CD8-positive, alpha-beta T cell (primary cell): ENCODE measurements at regions of chr7 and their contacts with region 1.

Region 1: DNA sequence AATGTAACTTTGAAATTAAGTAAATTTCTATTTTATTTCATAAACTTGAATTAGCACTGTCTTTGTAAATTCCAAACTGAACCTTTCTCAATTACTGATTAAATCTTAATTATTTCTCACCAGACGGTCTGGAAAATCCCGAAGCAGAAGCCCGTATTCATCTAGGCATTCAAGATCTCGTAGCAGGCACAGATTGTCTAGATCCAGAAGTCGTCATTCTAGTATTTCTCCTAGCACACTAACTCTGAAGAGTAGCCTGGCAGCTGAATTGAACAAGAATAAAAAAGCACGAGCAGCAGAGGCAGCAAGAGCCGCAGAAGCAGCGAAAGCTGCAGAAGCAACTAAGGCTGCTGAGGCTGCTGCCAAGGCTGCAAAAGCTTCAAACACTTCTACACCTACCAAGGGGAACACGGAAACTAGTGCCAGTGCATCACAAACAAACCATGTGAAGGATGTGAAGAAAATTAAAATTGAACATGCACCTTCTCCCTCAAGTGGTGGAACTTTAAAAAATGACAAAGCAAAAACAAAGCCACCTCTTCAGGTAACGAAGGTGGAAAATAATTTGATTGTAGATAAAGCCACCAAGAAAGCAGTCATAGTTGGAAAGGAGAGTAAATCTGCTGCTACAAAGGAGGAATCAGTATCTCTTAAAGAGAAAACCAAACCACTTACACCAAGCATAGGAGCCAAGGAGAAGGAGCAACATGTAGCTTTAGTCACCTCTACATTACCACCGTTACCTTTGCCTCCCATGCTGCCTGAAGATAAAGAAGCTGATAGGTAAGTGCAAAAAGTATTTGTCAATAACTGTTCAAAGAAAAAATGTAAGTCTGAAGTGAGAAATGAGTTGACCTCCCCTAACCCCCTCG is 37.7 kb downstream of the CDK13 start:
- DNase-seq: peak in 6 of 9 experiments; percentile 16 to 72 (median 52)
- ATAC-seq: peak; percentile 87
- H3K4me3 ChIP-seq: no peak overlapping the region
- H3K4me3 Mint-ChIP-seq: peak overlapping the region; percentile 52
- H3K27ac ChIP-seq: peak overlapping the region; percentile 5 to 8
- H3K27ac Mint-ChIP-seq: peak overlapping the region; percentile 79
- H3K4me1 ChIP-seq: peaks cover 34% of the 10 kb centered on the region
- H3K4me1 Mint-ChIP-seq: peaks cover 51% of the 10 kb centered on the region
- H3K27me3 ChIP-seq: no peaks in the 10 kb centered on the region
- H3K27me3 Mint-ChIP-seq: no peaks in the 10 kb centered on the region
- CTCF ChIP-seq: no peak

Region 2: DNA sequence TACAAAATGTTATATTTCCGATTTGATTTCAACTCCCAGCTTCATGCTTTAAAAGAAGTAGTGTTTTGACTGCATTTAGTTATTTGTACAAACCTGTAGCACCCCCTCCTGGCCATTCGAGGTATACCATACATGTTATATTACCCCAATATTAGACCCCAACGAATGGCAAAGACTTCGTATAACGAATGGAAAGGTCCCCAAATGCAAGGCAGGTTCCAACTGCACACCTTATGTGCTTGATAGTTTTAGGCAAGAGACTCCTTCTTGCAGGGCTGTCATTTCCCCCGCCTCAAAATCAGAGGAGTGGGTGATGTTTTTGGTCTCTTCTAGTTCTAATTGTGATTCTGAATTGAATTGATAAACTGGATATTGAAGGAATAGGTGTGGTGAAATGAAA is 1613.2 kb before region 1 on chr7:
- CTCF ChIA-PET with region 1: no interaction called
- POLR2A ChIA-PET with region 1: no interaction called
- intact Hi-C with region 1: no loop called
- DNase-seq: peak in 8 of 9 experiments; percentile 52 to 79 (median 72)
- ATAC-seq: peak; percentile 74
- H3K4me3 ChIP-seq: no peak overlapping the region
- H3K4me3 Mint-ChIP-seq: no peak overlapping the region
- H3K27ac ChIP-seq: peak overlapping the region in 1 of 2 experiments; percentile 22
- H3K27ac Mint-ChIP-seq: peak overlapping the region; percentile 46
- H3K4me1 ChIP-seq: peaks cover 23% of the 10 kb centered on the region
- H3K4me1 Mint-ChIP-seq: peaks cover 52% of the 10 kb centered on the region
- H3K27me3 ChIP-seq: no peaks in the 10 kb centered on the region
- H3K27me3 Mint-ChIP-seq: no peaks in the 10 kb centered on the region
- CTCF ChIP-seq: peak; percentile 92

Region 3: GRCh38 chr7:38550836-38551235 is 1436.9 kb before region 1 on chr7:
- CTCF ChIA-PET with region 1: no interaction called
- POLR2A ChIA-PET with region 1: no interaction called
- intact Hi-C with region 1: no loop called
- DNase-seq: no peak
- ATAC-seq: no peak
- H3K4me3 ChIP-seq: no peak overlapping the region
- H3K4me3 Mint-ChIP-seq: no peak overlapping the region
- H3K27ac ChIP-seq: no peak overlapping the region
- H3K27ac Mint-ChIP-seq: no peak overlapping the region
- H3K4me1 ChIP-seq: no peaks in the 10 kb centered on the region
- H3K4me1 Mint-ChIP-seq: no peaks in the 10 kb centered on the region
- H3K27me3 ChIP-seq: no peaks in the 10 kb centered on the region
- H3K27me3 Mint-ChIP-seq: peaks cover 11% of the 10 kb centered on the region
- CTCF ChIP-seq: no peak

Region 4: GRCh38 chr7:39732837-39733804 is 254.6 kb before region 1 on chr7:
- CTCF ChIA-PET with region 1: no interaction called
- POLR2A ChIA-PET with region 1: no interaction called
- intact Hi-C with region 1: no loop called
- DNase-seq: peak; percentile 84 to 98 (median 95)
- ATAC-seq: peak; percentile 92
- H3K4me3 ChIP-seq: peak overlapping the region; percentile 79 to 85
- H3K4me3 Mint-ChIP-seq: peak overlapping the region; percentile 91
- H3K27ac ChIP-seq: peak overlapping the region; percentile 66 to 91
- H3K27ac Mint-ChIP-seq: peak overlapping the region; percentile 94
- H3K4me1 ChIP-seq: peaks cover 26% of the 10 kb centered on the region
- H3K4me1 Mint-ChIP-seq: peaks cover 40% of the 10 kb centered on the region
- H3K27me3 ChIP-seq: no peaks in the 10 kb centered on the region
- H3K27me3 Mint-ChIP-seq: no peaks in the 10 kb centered on the region
- CTCF ChIP-seq: no peak

Region 5: GRCh38 chr7:39937366-39938153 is 50.2 kb before region 1 on chr7:
- CTCF ChIA-PET with region 1: no interaction called
- POLR2A ChIA-PET with region 1: interaction called, 4 read pairs
- intact Hi-C with region 1: loop called in 1 of 2 experiments (anchors 1 kb)
- DNase-seq: no peak
- ATAC-seq: no peak
- H3K4me3 ChIP-seq: no peak overlapping the region
- H3K4me3 Mint-ChIP-seq: no peak overlapping the region
- H3K27ac ChIP-seq: no peak overlapping the region
- H3K27ac Mint-ChIP-seq: no peak overlapping the region
- H3K4me1 ChIP-seq: no peaks in the 10 kb centered on the region
- H3K4me1 Mint-ChIP-seq: no peaks in the 10 kb centered on the region
- H3K27me3 ChIP-seq: no peaks in the 10 kb centered on the region
- H3K27me3 Mint-ChIP-seq: no peaks in the 10 kb centered on the region
- CTCF ChIP-seq: no peak

Region 6: GRCh38 chr7:39971924-39972323 is 15.8 kb before region 1 on chr7:
- CTCF ChIA-PET with region 1: interaction called, 4 read pairs
- POLR2A ChIA-PET with region 1: no interaction called
- intact Hi-C with region 1: loop called in 1 of 2 experiments (anchors 2 kb)
- DNase-seq: no peak
- ATAC-seq: no peak
- H3K4me3 ChIP-seq: no peak overlapping the region
- H3K4me3 Mint-ChIP-seq: peak overlapping the region; percentile 18
- H3K27ac ChIP-seq: no peak overlapping the region
- H3K27ac Mint-ChIP-seq: no peak overlapping the region
- H3K4me1 ChIP-seq: peaks cover 64% of the 10 kb centered on the region
- H3K4me1 Mint-ChIP-seq: peaks cover 73% of the 10 kb centered on the region
- H3K27me3 ChIP-seq: no peaks in the 10 kb centered on the region
- H3K27me3 Mint-ChIP-seq: no peaks in the 10 kb centered on the region
- CTCF ChIP-seq: no peak

Region 7: GRCh38 chr7:40033826-40034225 is 46.1 kb after region 1 on chr7:
- CTCF ChIA-PET with region 1: no interaction called
- POLR2A ChIA-PET with region 1: no interaction called
- intact Hi-C with region 1: loop called in 1 of 2 experiments (anchors 5 kb)
- DNase-seq: no peak
- ATAC-seq: no peak
- H3K4me3 ChIP-seq: no peak overlapping the region
- H3K4me3 Mint-ChIP-seq: no peak overlapping the region
- H3K27ac ChIP-seq: no peak overlapping the region
- H3K27ac Mint-ChIP-seq: peak overlapping the region; percentile 11
- H3K4me1 ChIP-seq: no peaks in the 10 kb centered on the region
- H3K4me1 Mint-ChIP-seq: peaks cover 41% of the 10 kb centered on the region
- H3K27me3 ChIP-seq: no peaks in the 10 kb centered on the region
- H3K27me3 Mint-ChIP-seq: no peaks in the 10 kb centered on the region
- CTCF ChIP-seq: no peak